ENCODE measurements at regions of chr4 and their contacts with region 1.

Region 1: DNA sequence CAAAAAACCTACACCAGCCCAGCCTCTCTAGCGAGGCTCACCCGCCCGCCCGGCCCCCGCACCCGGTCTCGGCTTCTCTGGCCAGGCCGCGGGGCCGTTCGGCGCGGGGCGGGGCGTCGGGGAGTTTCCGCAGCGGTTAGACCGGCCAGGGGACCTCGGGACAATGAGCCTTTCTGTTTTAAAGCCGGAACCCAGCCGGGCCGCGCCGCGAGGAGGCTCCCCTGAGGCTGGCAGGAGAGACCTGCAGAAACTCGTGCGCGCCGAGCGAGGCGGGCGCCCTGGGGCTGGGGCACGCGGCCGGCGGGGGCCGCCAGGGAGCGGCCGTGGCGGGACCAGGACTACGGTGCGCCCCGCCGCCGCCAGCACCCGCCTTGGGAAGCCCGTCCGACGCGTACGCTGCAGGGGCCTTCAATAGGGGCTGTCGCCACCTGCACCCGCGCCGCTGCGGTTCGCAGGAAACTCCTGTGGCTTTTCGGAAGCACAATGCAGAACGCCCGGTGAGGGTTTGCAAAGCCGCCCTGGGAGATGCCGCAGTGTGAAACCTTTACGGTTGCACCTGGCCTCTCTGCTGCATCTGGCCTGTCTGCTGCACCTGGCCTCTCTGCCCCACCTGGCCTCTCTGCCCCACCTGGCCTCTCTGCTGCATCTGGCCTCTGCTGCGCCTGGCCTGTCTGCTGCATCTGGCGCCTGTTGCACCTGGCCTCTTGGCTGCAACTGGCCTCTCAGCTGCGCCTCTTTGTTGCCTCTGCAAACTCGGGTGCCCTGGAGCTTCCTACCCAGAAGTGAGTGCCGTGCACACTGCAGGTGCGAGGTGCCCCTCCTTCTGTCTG is 63.9 kb downstream of the TRAPPC11 start:
- DNase-seq: peak; percentile 72 to 78
- H3K4me3 ChIP-seq: peak overlapping the region; percentile 39
- H3K4me3 Mint-ChIP-seq: peak overlapping the region; percentile 78
- H3K27ac Mint-ChIP-seq: peak overlapping the region; percentile 45
- H3K4me1 ChIP-seq: no peaks in the 10 kb centered on the region
- H3K4me1 Mint-ChIP-seq: no peaks in the 10 kb centered on the region
- H3K27me3 ChIP-seq: no peaks in the 10 kb centered on the region
- H3K27me3 Mint-ChIP-seq: no peaks in the 10 kb centered on the region
- CTCF ChIP-seq: no peak

Region 2: DNA sequence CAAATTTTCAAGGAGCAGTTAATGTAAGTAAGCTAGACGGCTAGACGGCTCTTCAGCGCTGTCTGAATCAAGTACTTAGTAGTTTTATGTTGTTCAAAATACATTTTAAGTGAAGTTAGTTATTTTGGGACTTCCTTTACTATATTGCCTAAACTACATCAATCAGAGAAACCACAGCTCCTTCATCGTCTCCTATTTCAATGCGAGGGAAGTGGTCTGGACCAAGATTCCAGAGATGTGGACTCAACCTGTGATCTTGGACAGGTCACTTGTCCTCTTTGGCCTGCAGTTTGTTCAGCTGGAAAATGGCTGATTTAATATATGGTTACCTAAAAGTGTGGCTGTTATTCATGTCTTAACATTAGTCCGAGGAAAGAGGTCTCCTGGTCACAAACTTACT is 207.5 kb before region 1 on chr4:
- CTCF ChIA-PET with region 1: no interaction called
- POLR2A ChIA-PET with region 1: no interaction called
- intact Hi-C with region 1: no loop called
- DNase-seq: no peak
- H3K4me3 ChIP-seq: no peak overlapping the region
- H3K4me3 Mint-ChIP-seq: no peak overlapping the region
- H3K27ac Mint-ChIP-seq: no peak overlapping the region
- H3K4me1 ChIP-seq: no peaks in the 10 kb centered on the region
- H3K4me1 Mint-ChIP-seq: no peaks in the 10 kb centered on the region
- H3K27me3 ChIP-seq: no peaks in the 10 kb centered on the region
- H3K27me3 Mint-ChIP-seq: no peaks in the 10 kb centered on the region
- CTCF ChIP-seq: no peak

Region 3: DNA sequence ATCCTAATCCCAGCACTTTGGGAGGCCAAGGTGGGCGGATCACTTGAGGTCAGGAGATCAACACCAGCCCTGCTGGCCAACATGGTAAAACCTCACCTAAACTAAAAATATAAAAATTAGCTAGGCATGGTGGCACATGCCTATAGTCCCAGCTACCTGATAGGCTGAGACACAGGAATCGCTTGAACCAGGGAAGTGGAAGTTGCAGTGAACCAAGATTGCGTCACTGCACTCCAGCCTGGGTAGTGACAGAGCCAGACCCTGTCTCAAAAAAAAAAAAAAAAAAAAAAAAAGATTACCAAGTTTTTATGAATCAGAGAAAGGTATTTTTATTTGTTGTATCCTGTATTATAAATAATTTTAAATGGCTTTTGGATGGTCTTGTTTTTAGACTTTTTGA is 48.8 kb before region 1 on chr4:
- CTCF ChIA-PET with region 1: no interaction called
- POLR2A ChIA-PET with region 1: interaction called, 21 read pairs
- intact Hi-C with region 1: no loop called
- DNase-seq: no peak
- H3K4me3 ChIP-seq: no peak overlapping the region
- H3K4me3 Mint-ChIP-seq: no peak overlapping the region
- H3K27ac Mint-ChIP-seq: no peak overlapping the region
- H3K4me1 ChIP-seq: no peaks in the 10 kb centered on the region
- H3K4me1 Mint-ChIP-seq: no peaks in the 10 kb centered on the region
- H3K27me3 ChIP-seq: no peaks in the 10 kb centered on the region
- H3K27me3 Mint-ChIP-seq: no peaks in the 10 kb centered on the region
- CTCF ChIP-seq: no peak

Region 4: DNA sequence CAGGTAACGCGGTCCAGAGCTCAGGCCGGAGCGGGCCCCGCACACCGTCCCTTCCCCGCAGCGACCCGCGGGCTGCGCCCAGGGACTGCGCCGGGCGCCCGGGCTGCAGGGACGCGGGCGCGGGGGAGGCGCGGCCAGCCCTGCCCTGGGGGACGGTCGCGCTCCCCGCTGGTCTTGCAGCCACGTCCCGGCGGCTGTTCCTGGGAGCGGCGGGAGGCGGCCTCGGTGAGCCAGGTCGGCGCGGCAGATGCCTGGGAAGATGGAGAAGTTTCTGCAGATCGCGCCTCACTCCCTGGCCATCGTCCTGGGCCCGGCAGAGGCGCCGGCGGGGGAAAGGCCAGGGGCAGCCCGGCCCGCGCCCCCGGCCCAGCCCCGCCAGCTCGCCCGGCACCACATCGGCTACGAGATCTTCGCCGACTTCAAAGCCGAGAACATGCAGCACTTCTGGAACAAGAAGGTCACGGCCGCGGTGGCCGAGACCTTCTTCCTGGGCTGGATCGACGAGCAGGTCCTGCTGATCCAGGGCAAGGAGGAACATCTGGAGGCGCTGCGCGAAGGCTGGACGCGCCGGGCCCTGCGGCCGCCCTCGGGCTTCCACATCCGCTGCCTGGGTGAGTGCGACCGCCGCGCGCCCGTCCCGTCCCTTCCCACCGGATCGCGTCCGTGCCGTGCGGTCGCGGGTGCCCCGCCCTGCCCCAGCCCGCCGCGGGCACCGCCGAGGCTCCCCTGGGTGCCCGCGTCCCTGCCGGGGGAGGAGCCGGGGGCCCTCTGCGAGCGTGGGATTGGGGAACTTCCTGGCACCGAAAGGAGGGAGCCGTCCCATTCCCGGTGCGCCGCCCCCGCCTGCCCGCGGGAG is 74.7 kb after region 1 on chr4:
- CTCF ChIA-PET with region 1: no interaction called
- POLR2A ChIA-PET with region 1: no interaction called
- intact Hi-C with region 1: loop called (anchors 5 kb)
- DNase-seq: peak; percentile 41 to 57
- H3K4me3 ChIP-seq: peak overlapping the region; percentile 53
- H3K4me3 Mint-ChIP-seq: peak overlapping the region; percentile 72
- H3K27ac Mint-ChIP-seq: no peak overlapping the region
- H3K4me1 ChIP-seq: no peaks in the 10 kb centered on the region
- H3K4me1 Mint-ChIP-seq: no peaks in the 10 kb centered on the region
- H3K27me3 ChIP-seq: no peaks in the 10 kb centered on the region; the same call in 1 of the 2 replicates
- H3K27me3 Mint-ChIP-seq: peaks cover 6% of the 10 kb centered on the region
- CTCF ChIP-seq: no peak

Region 5: GRCh38 chr4:184395971-184396391 is 673.0 kb after region 1 on chr4:
- CTCF ChIA-PET with region 1: no interaction called
- POLR2A ChIA-PET with region 1: no interaction called
- intact Hi-C with region 1: no loop called
- DNase-seq: no peak
- H3K4me3 ChIP-seq: no peak overlapping the region
- H3K4me3 Mint-ChIP-seq: no peak overlapping the region
- H3K27ac Mint-ChIP-seq: no peak overlapping the region
- H3K4me1 ChIP-seq: no peaks in the 10 kb centered on the region
- H3K4me1 Mint-ChIP-seq: no peaks in the 10 kb centered on the region
- H3K27me3 ChIP-seq: no peaks in the 10 kb centered on the region
- H3K27me3 Mint-ChIP-seq: no peaks in the 10 kb centered on the region
- CTCF ChIP-seq: no peak

Measured in Caco-2 (cell line).